ENCODE measurements at regions of chr4 and their contacts with region 1.

Region 1: DNA sequence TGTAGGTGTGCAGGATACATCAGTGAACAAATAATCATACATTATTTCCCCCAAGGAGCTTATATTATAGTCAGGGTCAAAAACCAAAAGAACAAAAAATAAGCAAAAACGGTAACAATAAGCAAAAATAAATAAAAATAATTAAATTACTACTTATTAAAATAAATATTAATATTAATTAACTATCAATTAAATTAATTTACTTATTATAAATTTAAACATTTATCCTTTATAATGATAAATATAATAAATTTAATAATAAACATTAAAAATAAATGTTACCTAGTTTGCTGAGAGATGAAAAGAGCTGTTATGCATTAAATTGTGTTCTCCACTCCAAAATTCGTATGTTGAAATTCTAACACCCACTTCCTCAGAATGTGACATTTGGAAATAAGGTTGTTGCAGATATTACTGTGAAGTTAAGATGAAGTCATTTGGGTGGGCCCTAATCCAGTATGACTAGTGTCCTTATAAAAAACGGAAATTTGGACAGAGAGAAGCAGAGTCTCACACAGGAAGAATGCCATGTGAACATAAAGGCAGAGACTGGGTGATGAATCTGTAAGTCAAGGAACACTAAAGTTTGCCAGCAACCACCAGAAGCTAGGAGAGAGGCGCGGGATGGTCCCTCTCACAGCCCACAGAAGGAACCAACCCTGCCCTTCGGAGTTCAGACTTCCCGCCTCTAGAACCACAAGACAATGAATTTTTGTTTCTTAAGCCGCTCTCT is 67.2 kb upstream of the IBSP start:
- H3K4me3 Mint-ChIP-seq: no peak overlapping the region
- H3K27ac Mint-ChIP-seq: peak overlapping the region; percentile 80
- H3K4me1 Mint-ChIP-seq: peaks cover 13% of the 10 kb centered on the region
- H3K27me3 Mint-ChIP-seq: no peaks in the 10 kb centered on the region

Region 2: GRCh38 chr4:88027611-88028608 is 295.7 kb after region 1 on chr4:
- intact Hi-C with region 1: loop called (anchors 10 kb)
- H3K4me3 Mint-ChIP-seq: peak overlapping the region; percentile 26
- H3K27ac Mint-ChIP-seq: peak overlapping the region; percentile 89
- H3K4me1 Mint-ChIP-seq: peaks cover 39% of the 10 kb centered on the region
- H3K27me3 Mint-ChIP-seq: no peaks in the 10 kb centered on the region

Measured in dendritic cell treated with granulocyte-macrophage colony-stimulating factor and Interleukin-4, amounts not matched to agents 40 ng/mL and 50 ng/mL, for 4 days (primary cell).